CD8-positive, alpha-beta T cell (primary cell): ENCODE measurements at regions of chr1 and their contacts with region 1.

Region 1: DNA sequence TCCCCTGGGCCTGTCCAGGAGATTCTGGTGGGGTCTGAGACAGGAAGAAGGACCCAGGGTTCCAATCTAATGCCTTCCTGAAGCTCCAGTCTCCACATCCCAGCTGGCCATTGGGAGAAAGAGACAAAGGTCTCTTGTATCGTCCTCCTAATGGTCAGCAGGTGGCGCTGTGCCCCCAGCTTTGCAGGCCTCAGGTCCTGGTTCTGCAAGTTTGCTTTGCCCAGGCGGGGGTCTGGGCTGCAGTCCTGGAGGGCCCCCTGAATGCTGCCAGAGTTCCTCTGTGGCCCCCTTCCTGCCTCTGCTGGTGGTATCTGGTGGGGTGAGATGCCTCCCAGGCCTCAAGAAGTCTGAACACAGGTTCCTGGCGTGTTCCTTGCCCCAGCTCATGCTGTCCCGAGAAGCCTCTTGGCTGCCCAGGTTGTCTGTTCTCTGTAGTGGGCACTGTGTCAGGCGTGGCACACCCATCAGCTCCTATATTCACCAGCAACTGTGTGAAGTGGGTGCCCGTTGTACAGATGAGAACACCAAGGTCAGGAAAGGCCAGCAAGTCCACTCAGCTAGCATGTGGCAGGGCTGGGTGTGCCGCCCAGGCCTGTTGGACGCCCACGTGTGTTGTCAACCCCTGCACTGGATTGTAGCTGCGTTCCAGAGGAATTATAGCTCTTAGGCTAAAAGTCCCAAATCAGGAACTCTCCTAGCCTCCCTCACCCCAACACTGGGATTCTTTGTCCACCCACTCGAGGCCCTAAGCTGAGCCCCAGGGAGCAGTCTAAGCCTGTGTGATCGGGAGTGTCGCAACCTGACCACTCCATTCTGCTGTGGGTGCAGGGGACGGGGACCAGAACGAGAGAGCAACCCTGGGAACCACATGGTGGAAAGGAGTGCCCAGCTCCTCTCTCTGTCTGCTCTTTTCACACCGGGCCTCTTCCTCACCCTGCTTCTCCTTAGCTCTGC is 33.9 kb upstream of the CSF3R start:
- DNase-seq: peak in 7 of 9 experiments; percentile 6 to 62 (median 35)
- ATAC-seq: peak; percentile 42
- H3K4me3 ChIP-seq: no peak overlapping the region
- H3K4me3 Mint-ChIP-seq: no peak overlapping the region
- H3K27ac ChIP-seq: no peak overlapping the region
- H3K27ac Mint-ChIP-seq: no peak overlapping the region
- H3K4me1 ChIP-seq: no peaks in the 10 kb centered on the region
- H3K4me1 Mint-ChIP-seq: no peaks in the 10 kb centered on the region
- H3K27me3 ChIP-seq: no peaks in the 10 kb centered on the region
- H3K27me3 Mint-ChIP-seq: peaks cover 3% of the 10 kb centered on the region
- CTCF ChIP-seq: peak; percentile 59

Region 2: GRCh38 chr1:36506276-36506920 is 10.3 kb before region 1 on chr1:
- CTCF ChIA-PET with region 1: interaction called, 18 read pairs
- POLR2A ChIA-PET with region 1: no interaction called
- intact Hi-C with region 1: no loop called
- DNase-seq: no peak
- ATAC-seq: no peak
- H3K4me3 ChIP-seq: no peak overlapping the region
- H3K4me3 Mint-ChIP-seq: no peak overlapping the region
- H3K27ac ChIP-seq: no peak overlapping the region
- H3K27ac Mint-ChIP-seq: no peak overlapping the region
- H3K4me1 ChIP-seq: no peaks in the 10 kb centered on the region
- H3K4me1 Mint-ChIP-seq: no peaks in the 10 kb centered on the region
- H3K27me3 ChIP-seq: no peaks in the 10 kb centered on the region
- H3K27me3 Mint-ChIP-seq: peaks cover 23% of the 10 kb centered on the region
- CTCF ChIP-seq: no peak